Activated CD4-positive, alpha-beta T cell treated with anti-CD3 and anti-CD28 coated beads, Interleukin-2, amount 10 ng/mL, durations not matched to agents 24 days and 14 days (primary cell): ENCODE measurements at regions of chr12 and their contacts with region 1.

Region 1: DNA sequence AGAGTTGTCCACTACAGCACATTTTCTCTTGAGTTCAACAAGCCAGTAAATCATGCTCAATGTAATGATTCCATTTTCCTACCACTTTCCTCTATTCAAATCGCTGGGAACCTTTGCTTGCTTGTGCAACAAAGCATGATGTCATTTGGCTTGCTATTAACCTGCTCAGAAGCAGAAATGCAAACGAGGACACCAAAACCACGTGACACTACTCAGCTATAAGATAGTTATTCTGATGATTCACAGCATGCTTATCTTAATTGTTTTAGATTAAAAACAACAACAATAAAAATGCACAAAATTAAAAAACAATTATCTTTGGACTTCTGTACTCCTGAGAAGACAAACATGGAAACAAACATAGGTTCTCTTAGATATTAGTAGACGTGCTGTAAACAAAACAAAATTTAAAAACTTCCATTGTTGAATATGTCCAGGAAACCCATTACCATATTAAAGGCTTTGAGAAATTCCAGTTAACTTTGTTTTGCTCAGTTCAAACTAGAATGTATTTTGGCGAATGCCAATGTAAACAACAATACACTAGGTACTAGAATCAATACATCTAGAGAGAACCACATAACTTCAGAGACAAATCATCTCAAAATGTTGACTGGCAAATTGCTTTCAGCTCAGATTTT is 77.5 kb upstream of the KRAS start:
- DNase-seq: no peak
- H3K4me3 Mint-ChIP-seq: no peak overlapping the region
- H3K27ac Mint-ChIP-seq: no peak overlapping the region
- H3K4me1 Mint-ChIP-seq: peaks cover 15% of the 10 kb centered on the region
- H3K27me3 Mint-ChIP-seq: peaks cover 15% of the 10 kb centered on the region

Region 2: GRCh38 chr12:25311506-25311905 is 16.7 kb before region 1 on chr12:
- intact Hi-C with region 1: no loop called
- DNase-seq: no peak
- H3K4me3 Mint-ChIP-seq: no peak overlapping the region
- H3K27ac Mint-ChIP-seq: no peak overlapping the region
- H3K4me1 Mint-ChIP-seq: no peaks in the 10 kb centered on the region
- H3K27me3 Mint-ChIP-seq: peaks cover 14% of the 10 kb centered on the region

Region 3: DNA sequence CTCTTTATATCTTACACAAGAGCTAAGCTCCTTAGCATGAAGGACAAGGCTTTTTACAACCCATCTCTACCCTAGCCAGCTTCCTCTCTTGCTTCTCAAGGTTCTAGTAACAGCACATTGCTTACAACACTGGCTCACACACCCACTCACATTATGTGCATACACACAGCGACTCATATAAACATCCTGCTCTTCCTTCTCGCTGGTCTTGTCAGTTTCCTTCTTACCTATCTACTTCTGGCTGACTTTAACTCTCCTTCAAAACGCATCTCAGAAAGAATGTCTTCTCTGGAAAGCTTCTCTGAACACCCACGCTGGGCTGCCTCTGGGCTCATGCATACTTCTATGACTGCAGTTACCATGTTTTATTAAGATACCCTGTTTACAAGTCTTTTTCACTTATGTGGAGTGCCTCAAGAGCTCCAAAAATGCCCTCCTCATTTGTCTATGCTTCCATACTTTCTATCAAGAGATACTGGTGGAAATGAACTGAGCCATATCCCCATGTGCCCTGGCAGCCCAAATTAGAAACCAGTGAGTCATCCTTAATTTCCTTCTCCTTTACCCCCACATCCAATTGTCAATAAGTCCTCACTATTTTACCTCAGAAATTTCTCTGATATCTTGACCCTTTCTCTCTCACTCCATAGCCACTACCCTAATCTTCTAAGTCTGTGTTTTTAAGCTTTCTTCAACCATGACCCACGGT is 49.4 kb after region 1 on chr12:
- intact Hi-C with region 1: loop called (anchors 1 kb)
- DNase-seq: peak; percentile 83
- H3K4me3 Mint-ChIP-seq: peak overlapping the region; percentile 40
- H3K27ac Mint-ChIP-seq: peak overlapping the region; percentile 72
- H3K4me1 Mint-ChIP-seq: peaks cover 68% of the 10 kb centered on the region
- H3K27me3 Mint-ChIP-seq: no peaks in the 10 kb centered on the region

Region 4: GRCh38 chr12:25743679-25744215 is 415.6 kb after region 1 on chr12:
- intact Hi-C with region 1: no loop called
- DNase-seq: no peak
- H3K4me3 Mint-ChIP-seq: no peak overlapping the region
- H3K27ac Mint-ChIP-seq: no peak overlapping the region
- H3K4me1 Mint-ChIP-seq: no peaks in the 10 kb centered on the region
- H3K27me3 Mint-ChIP-seq: peaks cover 6% of the 10 kb centered on the region

Region 5: GRCh38 chr12:25806271-25806670 is 478.1 kb after region 1 on chr12:
- intact Hi-C with region 1: no loop called
- DNase-seq: peak; percentile 71
- H3K4me3 Mint-ChIP-seq: peak overlapping the region; percentile 16
- H3K27ac Mint-ChIP-seq: peak overlapping the region; percentile 12
- H3K4me1 Mint-ChIP-seq: peaks cover 23% of the 10 kb centered on the region
- H3K27me3 Mint-ChIP-seq: no peaks in the 10 kb centered on the region